ENCODE measurements at regions of chr15 and their contacts with region 1.

Region 1: GRCh38 chr15:48330855-48331795 is at the start of gene DUT:
- DNase-seq: peak; percentile 83 to 87 (median 85)
- H3K4me3 ChIP-seq: peak within 1 kb of the TSS; percentile 55 to 84
- H3K4me3 Mint-ChIP-seq: peak within 1 kb of the TSS; percentile 96 to 100 (median 100)
- H3K27ac ChIP-seq: peak within 1 kb of the TSS; percentile 89
- H3K27ac Mint-ChIP-seq: peak within 1 kb of the TSS; percentile 98 to 100 (median 99)
- H3K4me1 ChIP-seq: peaks cover 21% of the 10 kb centered on the region
- H3K4me1 Mint-ChIP-seq: peaks cover 16 to 35% (median 27%) of the 10 kb centered on the region in 4 donors
- H3K27me3 ChIP-seq: no peaks in the 10 kb centered on the region
- H3K27me3 Mint-ChIP-seq: no peaks in the 10 kb centered on the region
- total RNA-seq, gene DUT: 127 to 131 TPM

Region 2: GRCh38 chr15:48029642-48030041 is 301.5 kb before region 1 on chr15:
- CTCF ChIA-PET with region 1: no interaction called
- POLR2A ChIA-PET with region 1: no interaction called
- intact Hi-C with region 1: no loop called
- DNase-seq: no peak
- H3K4me3 ChIP-seq: no peak overlapping the region
- H3K4me3 Mint-ChIP-seq: no peak overlapping the region
- H3K27ac ChIP-seq: no peak overlapping the region
- H3K27ac Mint-ChIP-seq: no peak overlapping the region
- H3K4me1 ChIP-seq: no peaks in the 10 kb centered on the region
- H3K4me1 Mint-ChIP-seq: no peaks in the 10 kb centered on the region
- H3K27me3 ChIP-seq: no peaks in the 10 kb centered on the region
- H3K27me3 Mint-ChIP-seq: peaks cover 0 to 3% of the 10 kb centered on the region in 2 donors

Region 3: GRCh38 chr15:48177766-48178647 is 153.1 kb before region 1 on chr15 and contains the start of gene MYEF2:
- CTCF ChIA-PET with region 1: no interaction called
- POLR2A ChIA-PET with region 1: interaction called, 6 read pairs
- intact Hi-C with region 1: loop called (anchors 10 kb)
- DNase-seq: peak; percentile 52 to 70 (median 64)
- H3K4me3 ChIP-seq: peak within 1 kb of the TSS in 1 of 2 donors; percentile 58
- H3K4me3 Mint-ChIP-seq: peak within 1 kb of the TSS; percentile 89 to 96 (median 92)
- H3K27ac ChIP-seq: peak within 1 kb of the TSS; percentile 51
- H3K27ac Mint-ChIP-seq: peak within 1 kb of the TSS; percentile 86 to 94 (median 92)
- H3K4me1 ChIP-seq: peaks cover 13% of the 10 kb centered on the region
- H3K4me1 Mint-ChIP-seq: peaks cover 9 to 18% (median 14%) of the 10 kb centered on the region in 4 donors
- H3K27me3 ChIP-seq: no peaks in the 10 kb centered on the region
- H3K27me3 Mint-ChIP-seq: peaks cover 5 to 8% of the 10 kb centered on the region in 2 donors
- total RNA-seq, gene MYEF2: 18.8 to 18.9 TPM

Region 4: DNA sequence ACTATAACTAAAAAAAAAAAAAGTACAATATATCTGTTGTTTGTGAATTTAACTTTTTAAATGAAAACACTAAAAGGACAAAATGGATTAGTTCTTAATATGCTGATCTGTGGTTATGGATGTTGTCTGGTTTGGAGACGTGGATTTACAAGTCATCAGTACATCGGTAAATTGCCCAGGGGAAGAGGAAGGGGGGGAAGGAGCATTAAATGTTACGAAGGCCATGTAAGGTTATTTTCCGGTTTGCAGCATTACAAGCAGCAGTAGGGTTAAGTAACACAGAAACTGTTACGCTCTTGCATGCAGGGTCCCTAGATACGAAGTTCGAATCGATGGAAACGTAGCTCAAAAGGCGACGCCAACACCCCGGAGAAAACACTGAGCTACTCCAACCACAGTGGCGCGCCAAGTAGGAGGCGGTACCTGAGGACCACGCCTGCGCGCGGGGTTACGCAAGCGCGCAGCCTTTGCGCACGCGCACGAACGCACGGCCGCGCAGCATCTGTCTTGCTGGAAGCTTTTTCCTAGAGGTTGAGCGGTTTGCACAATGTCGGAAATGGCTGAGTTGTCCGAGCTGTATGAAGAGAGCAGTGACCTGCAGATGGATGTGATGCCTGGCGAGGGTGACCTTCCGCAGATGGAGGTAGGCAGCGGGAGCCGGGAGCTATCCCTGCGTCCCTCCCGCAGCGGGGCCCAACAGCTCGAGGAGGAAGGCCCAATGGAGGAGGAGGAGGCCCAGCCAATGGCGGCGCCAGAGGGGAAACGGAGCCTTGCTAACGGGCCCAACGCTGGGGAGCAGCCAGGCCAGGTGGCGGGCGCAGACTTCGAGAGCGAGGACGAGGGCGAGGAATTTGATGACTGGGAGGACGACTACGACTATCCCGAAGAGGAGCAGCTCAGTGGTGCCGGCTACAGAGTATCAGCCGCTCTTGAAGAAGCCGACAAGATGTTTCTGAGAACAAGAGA is 546.8 kb after region 1 on chr15 and contains the start of gene EID1:
- CTCF ChIA-PET with region 1: no interaction called
- POLR2A ChIA-PET with region 1: no interaction called
- intact Hi-C with region 1: loop called (anchors 10 kb)
- DNase-seq: peak; percentile 93 to 95 (median 94)
- H3K4me3 ChIP-seq: peak within 1 kb of the TSS; percentile 74 to 96
- H3K4me3 Mint-ChIP-seq: peak within 1 kb of the TSS; percentile 96 to 100 (median 98)
- H3K27ac ChIP-seq: peak within 1 kb of the TSS; percentile 71
- H3K27ac Mint-ChIP-seq: peak within 1 kb of the TSS; percentile 97 to 100 (median 99)
- H3K4me1 ChIP-seq: peaks cover 26% of the 10 kb centered on the region
- H3K4me1 Mint-ChIP-seq: peaks cover 18 to 31% (median 24%) of the 10 kb centered on the region in 4 donors
- H3K27me3 ChIP-seq: no peaks in the 10 kb centered on the region
- H3K27me3 Mint-ChIP-seq: peaks cover 3 to 4% of the 10 kb centered on the region in 2 donors
- total RNA-seq, gene EID1: 76.0 to 91.2 TPM